IMR-90 (cell line): ENCODE measurements at regions of chr3 and their contacts with region 1.

Region 1: GRCh38 chr3:36957862-36958686 is 13.2 kb upstream of the TRANK1 start:
- DNase-seq: peak; percentile 93
- ATAC-seq: peak; percentile 65
- H3K4me3 ChIP-seq: no peak overlapping the region
- H3K27ac ChIP-seq: no peak overlapping the region
- H3K4me1 ChIP-seq: peaks cover 6% of the 10 kb centered on the region; the same call in 1 of the 2 replicates
- H3K27me3 ChIP-seq: no peaks in the 10 kb centered on the region
- CTCF ChIP-seq: no peak
- POLR2A ChIP-seq: no peak
- RAD21 ChIP-seq: no peak

Region 2: DNA sequence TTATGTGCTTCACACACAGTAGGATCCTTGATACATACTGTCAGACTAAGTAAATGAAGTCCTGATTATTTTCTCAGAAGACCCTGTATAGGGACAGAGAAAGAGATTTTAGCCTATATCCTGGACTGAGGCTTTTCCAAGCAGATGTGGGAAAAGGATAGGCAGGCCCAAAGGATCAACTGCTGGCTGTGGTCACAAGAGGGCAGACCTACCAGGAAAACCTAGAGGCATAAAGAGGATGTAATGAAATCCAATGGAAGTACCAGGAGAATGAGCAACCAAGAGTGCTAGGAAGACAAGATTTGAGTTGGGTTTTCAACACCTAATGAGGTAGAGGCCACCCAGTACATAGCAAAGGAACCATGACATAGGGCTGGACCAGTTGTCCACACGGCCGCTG is 216.8 kb before region 1 on chr3:
- CTCF ChIA-PET with region 1: no interaction called
- POLR2A ChIA-PET with region 1: no interaction called
- dilution Hi-C with region 1: no loop called
- in situ Hi-C with region 1: no loop called
- intact Hi-C with region 1: loop called (anchors 1 kb)
- DNase-seq: peak; percentile 3
- ATAC-seq: no peak; the same call in 1 of the 2 replicates
- H3K4me3 ChIP-seq: no peak overlapping the region
- H3K27ac ChIP-seq: no peak overlapping the region
- H3K4me1 ChIP-seq: no peaks in the 10 kb centered on the region
- H3K27me3 ChIP-seq: peaks cover 10% of the 10 kb centered on the region
- CTCF ChIP-seq: 0 out of 2 replicates have a peak, but pooled peaks have one; percentile 15
- POLR2A ChIP-seq: no peak
- RAD21 ChIP-seq: no peak

Region 3: GRCh38 chr3:36792342-36792741 is 165.7 kb before region 1 on chr3:
- CTCF ChIA-PET with region 1: interaction called, 7 read pairs
- POLR2A ChIA-PET with region 1: no interaction called
- dilution Hi-C with region 1: no loop called
- in situ Hi-C with region 1: no loop called
- intact Hi-C with region 1: loop called (anchors 1 kb)
- DNase-seq: peak; percentile 24
- ATAC-seq: peak; percentile 75
- H3K4me3 ChIP-seq: no peak overlapping the region
- H3K27ac ChIP-seq: no peak overlapping the region
- H3K4me1 ChIP-seq: no peaks in the 10 kb centered on the region
- H3K27me3 ChIP-seq: peaks cover 2% of the 10 kb centered on the region; the same call in 1 of the 2 replicates
- CTCF ChIP-seq: peak; percentile 47
- POLR2A ChIP-seq: no peak
- RAD21 ChIP-seq: peak; percentile 64

Region 4: GRCh38 chr3:36804295-36805055 is 153.6 kb before region 1 on chr3:
- CTCF ChIA-PET with region 1: no interaction called
- POLR2A ChIA-PET with region 1: no interaction called
- dilution Hi-C with region 1: no loop called
- in situ Hi-C with region 1: no loop called
- intact Hi-C with region 1: no loop called
- DNase-seq: no peak
- ATAC-seq: no peak
- H3K4me3 ChIP-seq: no peak overlapping the region
- H3K27ac ChIP-seq: no peak overlapping the region
- H3K4me1 ChIP-seq: no peaks in the 10 kb centered on the region
- H3K27me3 ChIP-seq: no peaks in the 10 kb centered on the region
- CTCF ChIP-seq: no peak
- POLR2A ChIP-seq: no peak
- RAD21 ChIP-seq: no peak

Region 5: DNA sequence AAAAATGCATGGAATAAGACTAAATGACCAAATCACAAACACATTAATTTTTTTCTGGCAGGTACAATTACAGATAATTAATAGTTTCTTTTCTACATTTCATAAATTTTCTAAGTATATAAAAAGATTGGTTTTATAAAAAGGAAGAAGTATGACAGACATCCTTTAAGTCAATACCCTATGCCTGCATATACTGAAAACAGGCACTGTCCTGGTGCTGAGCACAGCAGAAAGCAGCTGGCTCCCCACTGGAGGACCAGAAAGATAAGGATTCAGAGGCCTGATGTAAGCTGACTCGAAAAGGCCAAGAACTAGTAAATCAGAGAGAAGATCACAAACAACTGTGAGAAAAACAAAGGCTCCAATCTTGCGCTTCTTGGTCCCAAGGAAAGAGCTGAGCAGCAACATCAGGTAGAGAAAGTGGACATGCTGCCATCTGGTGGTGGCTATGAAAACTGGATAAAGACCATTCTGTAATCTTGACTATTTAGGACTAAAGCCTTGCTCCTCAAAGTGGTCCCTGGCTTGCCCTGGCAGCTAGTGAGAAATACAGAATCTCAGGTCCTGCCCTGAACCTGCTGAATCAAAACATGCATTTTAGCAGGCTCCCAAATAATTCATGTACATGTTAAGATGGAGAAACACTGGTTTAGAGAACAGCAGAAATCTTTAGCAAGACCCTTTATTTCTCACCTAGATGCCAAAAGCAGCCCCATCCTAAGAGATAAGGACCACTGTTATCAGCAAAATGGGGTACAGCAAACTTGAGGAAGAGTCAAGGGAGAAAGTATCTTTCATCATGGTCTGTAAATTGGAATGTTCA is 89.2 kb before region 1 on chr3:
- CTCF ChIA-PET with region 1: interaction called, 3 read pairs
- POLR2A ChIA-PET with region 1: no interaction called
- dilution Hi-C with region 1: no loop called
- in situ Hi-C with region 1: no loop called
- intact Hi-C with region 1: loop called (anchors 2 kb)
- DNase-seq: peak; percentile 63
- ATAC-seq: peak; percentile 88
- H3K4me3 ChIP-seq: no peak overlapping the region
- H3K27ac ChIP-seq: no peak overlapping the region
- H3K4me1 ChIP-seq: no peaks in the 10 kb centered on the region
- H3K27me3 ChIP-seq: no peaks in the 10 kb centered on the region
- CTCF ChIP-seq: peak; percentile 70
- POLR2A ChIP-seq: no peak
- RAD21 ChIP-seq: peak; percentile 64

Region 6: DNA sequence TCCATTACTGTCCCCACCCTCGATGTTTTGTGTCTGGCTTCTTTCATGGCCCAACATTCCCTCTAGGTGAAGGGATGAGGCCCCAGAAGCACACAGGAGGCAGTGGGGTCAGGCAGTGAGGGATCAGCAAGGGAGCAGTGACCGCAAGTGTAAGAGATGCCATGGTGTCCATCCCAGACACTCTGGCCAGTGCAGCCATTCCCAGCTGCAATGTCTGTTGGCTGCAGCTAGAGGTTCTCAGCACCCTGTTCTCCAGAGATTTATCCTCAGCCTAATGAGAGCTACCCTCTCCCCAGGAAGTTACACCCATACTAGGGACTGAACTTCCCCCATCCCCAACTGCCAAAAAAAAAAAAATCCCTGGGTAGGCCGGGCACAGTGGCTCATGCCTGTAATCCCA is 53.4 kb before region 1 on chr3:
- CTCF ChIA-PET with region 1: interaction called, 39 read pairs
- POLR2A ChIA-PET with region 1: no interaction called
- dilution Hi-C with region 1: no loop called
- in situ Hi-C with region 1: no loop called
- intact Hi-C with region 1: loop called (anchors 1 kb)
- DNase-seq: peak; percentile 36
- ATAC-seq: peak; percentile 76
- H3K4me3 ChIP-seq: no peak overlapping the region
- H3K27ac ChIP-seq: no peak overlapping the region
- H3K4me1 ChIP-seq: peaks cover 9% of the 10 kb centered on the region
- H3K27me3 ChIP-seq: no peaks in the 10 kb centered on the region
- CTCF ChIP-seq: peak; percentile 57
- POLR2A ChIP-seq: no peak
- RAD21 ChIP-seq: peak; percentile 57

Region 7: GRCh38 chr3:36923523-36923943 is 34.5 kb before region 1 on chr3:
- CTCF ChIA-PET with region 1: no interaction called
- POLR2A ChIA-PET with region 1: no interaction called
- dilution Hi-C with region 1: no loop called
- in situ Hi-C with region 1: no loop called
- intact Hi-C with region 1: no loop called
- DNase-seq: no peak
- ATAC-seq: no peak
- H3K4me3 ChIP-seq: no peak overlapping the region
- H3K27ac ChIP-seq: no peak overlapping the region
- H3K4me1 ChIP-seq: no peaks in the 10 kb centered on the region
- H3K27me3 ChIP-seq: no peaks in the 10 kb centered on the region
- CTCF ChIP-seq: no peak
- POLR2A ChIP-seq: no peak
- RAD21 ChIP-seq: no peak

Region 8: GRCh38 chr3:36944012-36944640 is 13.9 kb before region 1 on chr3:
- CTCF ChIA-PET with region 1: interaction called, 15 read pairs
- POLR2A ChIA-PET with region 1: no interaction called
- dilution Hi-C with region 1: no loop called
- in situ Hi-C with region 1: no loop called
- intact Hi-C with region 1: no loop called
- DNase-seq: peak; percentile 59
- ATAC-seq: peak; percentile 78
- H3K4me3 ChIP-seq: peak overlapping the region; percentile 41
- H3K27ac ChIP-seq: peak overlapping the region; percentile 73
- H3K4me1 ChIP-seq: peaks cover 8% of the 10 kb centered on the region
- H3K27me3 ChIP-seq: no peaks in the 10 kb centered on the region
- CTCF ChIP-seq: peak; percentile 13; the same call in 1 of the 2 replicates
- POLR2A ChIP-seq: no peak
- RAD21 ChIP-seq: no peak